Sigmoid colon (tissue), 7 donors: ENCODE measurements at regions of chr1 and their contacts with region 1.

Region 1: GRCh38 chr1:162023547-162024501 is at the start of gene OLFML2B:
- DNase-seq: peak; percentile 89
- H3K4me3 ChIP-seq: peak within 1 kb of the TSS; percentile 58 to 72 (median 67)
- H3K27ac ChIP-seq: peak within 1 kb of the TSS; percentile 33 to 84 (median 83)
- H3K4me1 ChIP-seq: peaks cover 0 to 52% (median 42%) of the 10 kb centered on the region in 4 donors
- H3K27me3 ChIP-seq: no peaks in the 10 kb centered on the region
- CTCF ChIP-seq: peak in 3 of 4 experiments; percentile 16 to 32 (median 23)
- EP300 ChIP-seq: no peak
- POLR2A ChIP-seq: peak; percentile 5 to 34
- total RNA-seq, gene OLFML2B: 14.3 to 27.4 (median 20.2) TPM

Region 2: DNA sequence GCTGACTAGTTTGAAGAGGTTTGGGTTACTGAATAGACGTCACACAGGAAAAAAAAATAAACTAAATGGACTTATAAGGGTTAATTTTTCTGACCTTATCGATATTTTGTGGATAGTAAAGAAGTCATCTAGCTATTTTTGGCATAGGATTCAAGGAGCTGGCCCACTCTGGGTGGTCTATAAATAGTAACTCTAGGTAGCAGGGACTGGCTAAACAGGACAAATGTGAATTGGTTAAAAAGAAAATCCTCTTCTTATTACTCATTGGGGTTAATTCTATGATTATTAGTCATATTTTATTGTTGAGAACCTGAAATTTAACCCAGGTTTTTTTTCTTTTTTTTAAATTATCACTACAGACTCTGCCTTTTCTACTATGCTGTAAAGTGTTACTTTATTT is 196.0 kb before region 1 on chr1:
- intact Hi-C with region 1: no loop called
- DNase-seq: no peak
- H3K4me3 ChIP-seq: no peak overlapping the region
- H3K27ac ChIP-seq: no peak overlapping the region
- H3K4me1 ChIP-seq: no peaks in the 10 kb centered on the region
- H3K27me3 ChIP-seq: no peaks in the 10 kb centered on the region
- CTCF ChIP-seq: no peak
- EP300 ChIP-seq: no peak
- POLR2A ChIP-seq: no peak

Region 3: DNA sequence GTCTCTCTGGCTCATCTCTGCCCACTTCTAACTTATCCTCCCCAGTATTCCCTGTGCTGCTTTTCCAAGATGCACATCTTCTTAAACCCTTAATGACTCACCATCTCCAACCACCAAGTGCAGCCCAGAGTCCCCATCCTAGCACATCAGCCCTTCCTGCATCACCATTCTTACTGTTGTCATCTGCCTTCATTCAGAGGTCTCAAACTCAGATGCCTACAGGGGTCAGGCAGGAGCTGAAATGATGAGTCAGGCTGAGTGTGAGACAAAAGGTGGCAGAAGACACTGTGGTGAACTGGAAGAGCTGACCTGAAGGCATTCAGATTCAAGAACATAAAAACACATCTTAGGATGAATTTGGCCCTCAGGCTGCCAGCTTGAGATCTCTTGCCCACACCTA is 34.7 kb before region 1 on chr1:
- intact Hi-C with region 1: loop called (anchors 2 kb)
- DNase-seq: no peak
- H3K4me3 ChIP-seq: no peak overlapping the region
- H3K27ac ChIP-seq: peak overlapping the region in 3 of 4 donors; percentile 72 to 85 (median 85)
- H3K4me1 ChIP-seq: peaks cover 0 to 61% (median 47%) of the 10 kb centered on the region in 4 donors
- H3K27me3 ChIP-seq: no peaks in the 10 kb centered on the region
- CTCF ChIP-seq: no peak
- EP300 ChIP-seq: no peak
- POLR2A ChIP-seq: no peak

Region 4: GRCh38 chr1:162548170-162548569 is 524.3 kb after region 1 on chr1:
- intact Hi-C with region 1: no loop called
- DNase-seq: peak; percentile 91
- H3K4me3 ChIP-seq: no peak overlapping the region
- H3K27ac ChIP-seq: peak overlapping the region; percentile 67 to 80 (median 74)
- H3K4me1 ChIP-seq: peaks cover 0 to 16% (median 9%) of the 10 kb centered on the region in 4 donors
- H3K27me3 ChIP-seq: no peaks in the 10 kb centered on the region
- CTCF ChIP-seq: no peak
- EP300 ChIP-seq: peak in 2 of 4 donors; percentile 10 to 87
- POLR2A ChIP-seq: no peak